Astrocyte of the cerebellum (primary cell): ENCODE measurements at regions of chr17 and their contacts with region 1.

Region 1: GRCh38 chr17:69239611-69240600 is 11.3 kb upstream of the ABCA10 start:
- DNase-seq: no peak
- H3K4me3 ChIP-seq: no peak overlapping the region
- CTCF ChIP-seq: no peak

Region 2: DNA sequence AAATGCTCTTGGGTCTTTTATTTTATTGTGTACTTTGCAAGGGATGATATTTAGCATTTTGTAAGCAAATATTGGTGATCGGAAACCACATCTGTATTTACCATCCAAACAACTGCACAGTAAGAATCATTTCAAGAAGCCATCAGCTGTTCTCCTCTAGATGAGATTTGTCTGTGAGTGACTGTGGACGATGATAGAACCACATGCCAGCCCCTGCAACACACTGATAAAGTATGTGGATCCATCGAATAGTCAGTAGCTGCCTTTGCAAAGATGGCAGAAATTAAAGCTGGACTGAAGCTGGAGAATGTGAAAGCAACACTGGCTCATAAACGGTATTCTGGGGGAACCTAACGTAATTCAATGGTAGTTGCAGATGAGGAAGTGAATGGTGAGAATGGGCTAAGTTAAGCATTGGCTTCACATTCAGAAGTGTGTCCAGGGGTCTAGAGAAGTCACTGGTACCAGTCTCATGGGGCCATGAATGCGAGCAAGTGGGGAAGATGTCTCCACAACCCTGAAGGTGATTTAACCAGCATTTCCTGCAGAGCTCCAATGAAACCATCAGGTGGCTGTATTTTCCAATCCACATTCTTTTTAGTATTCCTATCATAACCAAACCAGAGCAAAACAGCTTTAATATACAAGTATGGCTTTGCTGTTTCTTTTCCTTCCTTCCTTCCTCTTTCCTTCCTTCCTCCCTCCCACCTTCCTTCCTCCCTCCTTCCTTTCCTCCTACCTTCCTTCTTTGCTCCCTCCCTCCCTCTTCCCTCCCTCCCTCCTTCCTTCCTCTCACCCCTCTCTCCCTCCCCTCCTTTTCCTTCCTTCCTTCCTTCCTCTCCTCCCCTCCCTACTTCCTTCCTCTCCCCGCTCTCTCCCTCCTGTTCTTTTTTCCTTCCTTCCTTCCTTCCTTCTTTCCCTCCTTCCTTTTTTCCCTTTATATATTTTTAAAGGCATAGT is 454.1 kb before region 1 on chr17:
- in situ Hi-C with region 1: loop called (anchors 5 kb)
- DNase-seq: no peak
- H3K4me3 ChIP-seq: no peak overlapping the region
- CTCF ChIP-seq: no peak

Region 3: DNA sequence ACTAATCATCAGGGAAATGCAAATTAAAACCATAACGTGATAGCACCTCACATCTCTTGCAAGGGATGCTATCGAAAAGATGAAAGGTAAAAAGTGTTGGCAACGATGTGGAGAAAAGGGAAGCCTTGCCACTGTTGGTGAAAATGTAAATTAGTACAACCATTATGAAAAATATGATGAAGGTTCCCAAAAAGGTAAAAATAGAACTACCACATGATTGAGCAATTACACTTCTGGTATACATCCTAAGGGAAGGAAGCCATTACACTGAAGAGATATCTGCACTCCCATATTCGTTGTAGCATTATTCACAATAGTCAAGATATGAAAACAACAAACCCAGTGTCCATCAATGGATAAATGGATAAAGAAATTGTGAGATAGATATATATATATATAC is 32.8 kb before region 1 on chr17:
- in situ Hi-C with region 1: loop called (anchors 5 kb)
- DNase-seq: no peak
- H3K4me3 ChIP-seq: no peak overlapping the region
- CTCF ChIP-seq: no peak

Region 4: GRCh38 chr17:69287168-69287567 is 47.3 kb after region 1 on chr17:
- in situ Hi-C with region 1: no loop called
- DNase-seq: no peak
- H3K4me3 ChIP-seq: no peak overlapping the region
- CTCF ChIP-seq: no peak

Region 5: DNA sequence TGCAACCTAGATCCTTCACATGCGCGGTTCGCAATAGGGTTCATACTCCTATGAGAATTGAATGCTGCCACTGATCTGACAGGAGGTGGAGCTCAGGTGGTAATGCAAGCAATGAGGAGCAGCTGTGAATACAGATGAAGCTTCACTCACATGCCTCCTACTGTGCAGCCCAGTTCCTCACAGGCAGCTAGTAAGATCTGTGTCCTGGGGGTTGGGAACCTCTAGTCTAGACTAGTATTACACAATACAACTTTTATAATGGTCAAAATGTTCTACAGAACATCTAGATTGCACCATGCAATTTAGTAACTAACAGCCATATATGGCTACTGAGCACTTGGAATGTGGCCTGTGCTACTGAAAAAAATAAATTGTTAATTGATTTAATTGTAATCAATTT is 60.3 kb after region 1 on chr17:
- in situ Hi-C with region 1: no loop called
- DNase-seq: no peak
- H3K4me3 ChIP-seq: no peak overlapping the region
- CTCF ChIP-seq: no peak